ENCODE measurements at regions of chr18 and their contacts with region 1.

Region 1: DNA sequence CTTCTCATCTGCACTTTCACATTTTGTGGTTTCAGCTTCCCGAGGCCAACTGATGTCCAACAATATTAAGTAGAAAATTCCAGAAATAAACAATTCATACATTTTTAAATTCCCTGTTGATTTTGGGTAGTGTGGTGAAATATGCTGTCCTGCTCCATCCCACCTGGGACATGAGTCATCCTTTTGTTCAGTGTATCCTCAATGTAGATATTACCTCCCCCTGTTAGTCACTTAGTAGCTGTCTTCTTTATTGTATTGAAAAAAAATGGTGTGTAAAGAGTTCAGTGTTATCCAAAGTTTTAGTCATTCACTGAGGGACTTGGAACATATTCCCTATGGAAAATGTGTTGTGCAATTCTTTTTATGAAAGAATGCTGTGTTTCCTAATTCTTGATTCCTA is 348.1 kb downstream of the SOCS6 start:
- DNase-seq: no peak
- ATAC-seq: no peak
- H3K4me3 ChIP-seq: no peak overlapping the region
- H3K27ac ChIP-seq: no peak overlapping the region
- H3K4me1 ChIP-seq: no peaks in the 10 kb centered on the region
- H3K27me3 ChIP-seq: no peaks in the 10 kb centered on the region
- CTCF ChIP-seq: no peak
- EP300 ChIP-seq: no peak
- POLR2A ChIP-seq: no peak
- RAD21 ChIP-seq: no peak

Region 2: GRCh38 chr18:70535041-70535440 is 102.0 kb before region 1 on chr18:
- CTCF ChIA-PET with region 1: no interaction called
- POLR2A ChIA-PET with region 1: no interaction called
- RAD21 ChIA-PET with region 1: no interaction called
- SMC1A ChIA-PET with region 1: no interaction called
- in situ Hi-C with region 1: no loop called
- intact Hi-C with region 1: no loop called
- DNase-seq: no peak
- ATAC-seq: no peak
- H3K4me3 ChIP-seq: no peak overlapping the region
- H3K27ac ChIP-seq: no peak overlapping the region
- H3K4me1 ChIP-seq: no peaks in the 10 kb centered on the region
- H3K27me3 ChIP-seq: no peaks in the 10 kb centered on the region
- CTCF ChIP-seq: no peak
- EP300 ChIP-seq: no peak
- POLR2A ChIP-seq: no peak
- RAD21 ChIP-seq: no peak

Region 3: DNA sequence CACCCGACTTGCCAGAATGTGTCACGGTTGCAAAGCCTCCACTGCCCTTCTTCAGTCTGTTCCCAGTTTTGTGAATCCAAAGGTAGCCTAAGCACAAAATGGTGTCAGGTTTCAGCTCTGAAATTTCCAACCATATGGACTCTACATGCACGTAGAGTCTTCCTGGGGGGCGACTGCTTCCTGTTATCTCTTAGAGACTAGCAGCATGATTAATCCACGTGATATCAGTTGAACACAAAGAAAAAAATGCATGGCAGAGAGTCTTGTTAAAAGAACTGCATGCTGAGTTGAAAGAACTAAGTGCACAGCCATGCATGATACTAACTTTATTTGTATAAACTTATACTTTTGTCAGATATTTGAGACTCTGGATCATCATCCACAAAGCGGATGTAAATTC is 56.3 kb after region 1 on chr18:
- CTCF ChIA-PET with region 1: no interaction called
- POLR2A ChIA-PET with region 1: no interaction called
- RAD21 ChIA-PET with region 1: no interaction called
- SMC1A ChIA-PET with region 1: no interaction called
- in situ Hi-C with region 1: loop called (anchors 10 kb)
- intact Hi-C with region 1: no loop called
- DNase-seq: no peak
- ATAC-seq: no peak
- H3K4me3 ChIP-seq: no peak overlapping the region
- H3K27ac ChIP-seq: no peak overlapping the region
- H3K4me1 ChIP-seq: no peaks in the 10 kb centered on the region
- H3K27me3 ChIP-seq: no peaks in the 10 kb centered on the region
- CTCF ChIP-seq: no peak
- EP300 ChIP-seq: no peak
- POLR2A ChIP-seq: no peak
- RAD21 ChIP-seq: no peak

Region 4: DNA sequence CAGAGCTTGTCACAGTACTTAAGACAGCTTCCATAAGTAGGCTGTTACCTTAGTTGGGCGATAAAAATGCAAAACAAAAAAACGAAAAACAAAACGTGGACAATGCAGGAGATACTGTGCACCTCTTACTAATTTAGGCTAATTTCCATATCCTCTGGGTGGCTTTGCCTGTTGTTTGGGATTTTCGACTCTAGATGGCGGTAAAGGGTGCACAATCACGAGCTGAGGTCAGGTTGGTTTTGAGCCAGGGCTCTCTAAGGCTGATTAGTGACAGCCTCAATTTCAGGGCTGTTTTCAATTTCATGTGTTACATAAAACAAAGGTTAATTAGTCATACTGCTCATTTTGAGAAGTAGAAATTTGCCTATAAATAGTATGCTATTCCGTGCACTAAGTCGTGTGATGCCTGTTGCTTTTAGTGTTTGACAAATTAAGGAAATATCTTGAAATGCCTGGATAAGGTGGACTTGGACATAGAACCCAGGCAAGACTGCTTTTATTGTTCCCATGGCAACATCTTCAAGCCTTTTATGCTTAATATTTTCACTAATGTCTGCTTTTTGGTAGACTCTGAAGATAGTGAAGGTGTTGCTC is 145.0 kb after region 1 on chr18:
- CTCF ChIA-PET with region 1: no interaction called
- POLR2A ChIA-PET with region 1: no interaction called
- RAD21 ChIA-PET with region 1: no interaction called
- SMC1A ChIA-PET with region 1: no interaction called
- in situ Hi-C with region 1: no loop called
- intact Hi-C with region 1: no loop called
- DNase-seq: peak; percentile 15
- ATAC-seq: peak; percentile 91
- H3K4me3 ChIP-seq: no peak overlapping the region
- H3K27ac ChIP-seq: no peak overlapping the region
- H3K4me1 ChIP-seq: no peaks in the 10 kb centered on the region
- H3K27me3 ChIP-seq: no peaks in the 10 kb centered on the region
- CTCF ChIP-seq: peak; percentile 65 to 70 (median 67)
- EP300 ChIP-seq: no peak
- POLR2A ChIP-seq: no peak
- RAD21 ChIP-seq: peak; percentile 67